GM12878 (cell line): ENCODE measurements at regions of chr15 and their contacts with region 1.

Region 1: GRCh38 chr15:39419651-39420050 is 161.2 kb upstream of the THBS1 start:
- DNase-seq: no peak
- ATAC-seq: no peak
- H3K4me3 ChIP-seq: no peak overlapping the region
- H3K27ac ChIP-seq: no peak overlapping the region
- H3K4me1 ChIP-seq: no peaks in the 10 kb centered on the region
- H3K27me3 ChIP-seq: no peaks in the 10 kb centered on the region
- CTCF ChIP-seq: no peak
- EP300 ChIP-seq: no peak
- POLR2A ChIP-seq: no peak
- RAD21 ChIP-seq: no peak

Region 2: DNA sequence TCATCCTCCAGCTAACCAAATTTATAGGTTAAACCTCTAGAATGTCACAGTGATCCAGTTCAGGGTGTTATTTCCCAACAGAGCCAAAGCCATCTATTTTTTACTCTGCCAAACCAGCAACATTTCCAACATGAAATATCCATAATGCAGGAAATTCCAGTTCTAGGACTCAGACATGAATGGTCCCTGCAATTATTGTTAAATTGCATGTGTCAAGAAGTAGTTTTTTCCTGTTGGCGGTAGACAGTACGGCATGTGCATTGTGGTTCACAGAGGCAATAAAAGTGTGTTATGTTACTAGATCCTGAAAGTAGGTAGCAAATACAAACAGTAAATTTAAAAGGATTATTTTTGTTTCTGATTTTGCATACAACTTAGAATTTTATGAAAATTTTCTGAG is 54.5 kb before region 1 on chr15:
- CTCF ChIA-PET with region 1: no interaction called
- POLR2A ChIA-PET with region 1: no interaction called
- RAD21 ChIA-PET with region 1: no interaction called
- SMC1A ChIA-PET with region 1: no interaction called
- in situ Hi-C with region 1: loop called (anchors 5 kb)
- intact Hi-C with region 1: no loop called
- DNase-seq: no peak
- ATAC-seq: no peak
- H3K4me3 ChIP-seq: no peak overlapping the region
- H3K27ac ChIP-seq: no peak overlapping the region
- H3K4me1 ChIP-seq: no peaks in the 10 kb centered on the region
- H3K27me3 ChIP-seq: no peaks in the 10 kb centered on the region
- CTCF ChIP-seq: no peak
- EP300 ChIP-seq: no peak
- POLR2A ChIP-seq: no peak
- RAD21 ChIP-seq: no peak

Region 3: GRCh38 chr15:39391230-39391629 is 28.4 kb before region 1 on chr15:
- CTCF ChIA-PET with region 1: no interaction called
- POLR2A ChIA-PET with region 1: no interaction called
- RAD21 ChIA-PET with region 1: no interaction called
- SMC1A ChIA-PET with region 1: no interaction called
- in situ Hi-C with region 1: no loop called
- intact Hi-C with region 1: no loop called
- DNase-seq: no peak
- ATAC-seq: no peak
- H3K4me3 ChIP-seq: no peak overlapping the region
- H3K27ac ChIP-seq: no peak overlapping the region
- H3K4me1 ChIP-seq: no peaks in the 10 kb centered on the region
- H3K27me3 ChIP-seq: no peaks in the 10 kb centered on the region; a peak in 1 of 4 replicates
- CTCF ChIP-seq: no peak
- EP300 ChIP-seq: no peak
- POLR2A ChIP-seq: no peak
- RAD21 ChIP-seq: no peak